PC-9 (cell line): ENCODE measurements at regions of chr2 and their contacts with region 1.

Region 1: GRCh38 chr2:143259368-143259958 is 130.2 kb downstream of the ARHGAP15 start:
- DNase-seq: peak; percentile 49 to 57
- H3K4me3 ChIP-seq: no peak overlapping the region
- H3K27ac ChIP-seq: no peak overlapping the region
- H3K4me1 ChIP-seq: no peaks in the 10 kb centered on the region
- H3K27me3 ChIP-seq: no peaks in the 10 kb centered on the region
- CTCF ChIP-seq: peak; percentile 76

Region 2: GRCh38 chr2:143034292-143035074 is 225.0 kb before region 1 on chr2:
- CTCF ChIA-PET with region 1: interaction called, 3 read pairs
- POLR2A ChIA-PET with region 1: no interaction called
- intact Hi-C with region 1: loop called (anchors 1 kb)
- DNase-seq: peak; percentile 50 to 70
- H3K4me3 ChIP-seq: no peak overlapping the region
- H3K27ac ChIP-seq: no peak overlapping the region
- H3K4me1 ChIP-seq: no peaks in the 10 kb centered on the region
- H3K27me3 ChIP-seq: no peaks in the 10 kb centered on the region
- CTCF ChIP-seq: peak; percentile 94

Region 3: DNA sequence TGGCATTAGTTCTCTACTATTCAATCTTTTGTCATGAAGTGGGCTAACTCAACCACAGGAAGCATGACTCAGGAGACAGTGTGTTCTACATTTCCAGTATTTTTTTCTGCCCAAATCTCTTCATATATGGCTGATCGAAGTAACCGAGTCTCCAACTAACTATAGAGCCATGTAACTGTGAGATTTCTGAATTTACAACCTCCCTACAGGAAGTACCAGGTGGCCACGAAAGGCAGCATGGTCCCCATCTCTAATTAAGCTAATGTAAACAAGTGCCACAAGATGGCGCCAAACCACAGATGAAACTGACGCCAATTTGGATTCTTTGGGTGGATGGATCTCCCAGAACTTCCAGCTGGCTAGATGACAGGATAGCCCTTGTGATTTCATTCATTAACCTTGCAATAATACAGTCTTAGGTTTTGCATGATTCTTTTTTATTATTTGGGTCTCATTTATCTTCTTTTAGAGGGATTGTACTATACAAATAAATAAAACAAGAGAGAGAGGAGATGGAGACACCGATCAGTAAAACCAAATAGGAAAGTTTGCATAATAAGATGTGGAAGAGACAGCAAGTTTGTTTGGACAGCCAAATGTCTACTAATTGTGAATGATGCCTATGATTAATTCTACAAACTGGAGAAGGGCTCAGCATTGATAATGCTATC is 148.6 kb before region 1 on chr2:
- CTCF ChIA-PET with region 1: interaction called, 3 read pairs
- POLR2A ChIA-PET with region 1: interaction called, 5 read pairs
- intact Hi-C with region 1: loop called (anchors 1 kb)
- DNase-seq: peak in 1 of 2 experiments; percentile 33
- H3K4me3 ChIP-seq: no peak overlapping the region
- H3K27ac ChIP-seq: no peak overlapping the region
- H3K4me1 ChIP-seq: no peaks in the 10 kb centered on the region
- H3K27me3 ChIP-seq: no peaks in the 10 kb centered on the region
- CTCF ChIP-seq: peak; percentile 79

Region 4: GRCh38 chr2:143162123-143162837 is 97.2 kb before region 1 on chr2:
- CTCF ChIA-PET with region 1: no interaction called
- POLR2A ChIA-PET with region 1: no interaction called
- intact Hi-C with region 1: loop called (anchors 2 kb)
- DNase-seq: peak in 1 of 2 experiments; percentile 9
- H3K4me3 ChIP-seq: no peak overlapping the region
- H3K27ac ChIP-seq: no peak overlapping the region
- H3K4me1 ChIP-seq: no peaks in the 10 kb centered on the region
- H3K27me3 ChIP-seq: no peaks in the 10 kb centered on the region
- CTCF ChIP-seq: peak; percentile 75